T-cell (primary cell): ENCODE measurements at regions of chr2 and their contacts with region 1.

Region 1: DNA sequence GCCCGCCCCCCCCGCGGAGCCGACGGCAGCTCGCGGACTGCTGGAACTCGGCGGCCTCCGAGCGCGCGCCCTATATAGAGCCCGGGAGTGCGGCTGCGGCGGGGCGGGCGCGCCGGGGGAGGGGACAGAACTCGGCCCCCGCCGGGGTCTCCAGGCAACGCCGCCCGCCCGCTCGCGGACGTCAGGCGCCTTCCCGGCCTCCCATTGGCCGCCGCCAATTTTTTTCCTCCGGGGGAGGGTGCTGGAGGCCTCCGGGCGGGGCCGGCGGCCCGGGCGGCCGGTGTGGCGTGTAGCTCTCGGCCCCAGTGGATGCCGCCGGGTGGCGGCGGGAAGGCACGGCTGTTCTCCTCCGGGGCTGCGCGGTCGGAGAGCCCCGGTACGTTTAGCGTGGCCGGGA is at the start of gene ZFP36L2:
- DNase-seq: peak; percentile 85 to 98 (median 91)
- ATAC-seq: peak; percentile 71 to 77 (median 76)
- H3K4me3 ChIP-seq: peak within 1 kb of the TSS; percentile 92 to 98
- H3K4me3 Mint-ChIP-seq: peak within 1 kb of the TSS; percentile 74 to 98 (median 95)
- H3K27ac ChIP-seq: peak within 1 kb of the TSS; percentile 89
- H3K27ac Mint-ChIP-seq: peak within 1 kb of the TSS; percentile 93 to 96
- H3K4me1 ChIP-seq: peaks cover 17 to 31% of the 10 kb centered on the region in 2 experiments
- H3K4me1 Mint-ChIP-seq: peaks cover 26 to 43% (median 29%) of the 10 kb centered on the region in 3 donors
- H3K27me3 ChIP-seq: no peaks in the 10 kb centered on the region
- H3K27me3 Mint-ChIP-seq: peaks cover 0 to 4% of the 10 kb centered on the region in 2 donors
- total RNA-seq, gene ZFP36L2: 329 to 974 (median 377) TPM

Region 2: GRCh38 chr2:42944779-42945415 is 281.7 kb before region 1 on chr2:
- CTCF ChIA-PET with region 1: interaction called, 5 to 14 read pairs
- POLR2A ChIA-PET with region 1: no interaction called
- DNase-seq: no peak
- ATAC-seq: no peak
- H3K4me3 ChIP-seq: no peak overlapping the region
- H3K4me3 Mint-ChIP-seq: no peak overlapping the region
- H3K27ac ChIP-seq: no peak overlapping the region
- H3K27ac Mint-ChIP-seq: no peak overlapping the region
- H3K4me1 ChIP-seq: no peaks in the 10 kb centered on the region
- H3K4me1 Mint-ChIP-seq: peaks cover 0 to 5% (median 2%) of the 10 kb centered on the region in 3 donors
- H3K27me3 ChIP-seq: peaks cover 0 to 12% of the 10 kb centered on the region in 2 experiments
- H3K27me3 Mint-ChIP-seq: no peaks in the 10 kb centered on the region

Region 3: DNA sequence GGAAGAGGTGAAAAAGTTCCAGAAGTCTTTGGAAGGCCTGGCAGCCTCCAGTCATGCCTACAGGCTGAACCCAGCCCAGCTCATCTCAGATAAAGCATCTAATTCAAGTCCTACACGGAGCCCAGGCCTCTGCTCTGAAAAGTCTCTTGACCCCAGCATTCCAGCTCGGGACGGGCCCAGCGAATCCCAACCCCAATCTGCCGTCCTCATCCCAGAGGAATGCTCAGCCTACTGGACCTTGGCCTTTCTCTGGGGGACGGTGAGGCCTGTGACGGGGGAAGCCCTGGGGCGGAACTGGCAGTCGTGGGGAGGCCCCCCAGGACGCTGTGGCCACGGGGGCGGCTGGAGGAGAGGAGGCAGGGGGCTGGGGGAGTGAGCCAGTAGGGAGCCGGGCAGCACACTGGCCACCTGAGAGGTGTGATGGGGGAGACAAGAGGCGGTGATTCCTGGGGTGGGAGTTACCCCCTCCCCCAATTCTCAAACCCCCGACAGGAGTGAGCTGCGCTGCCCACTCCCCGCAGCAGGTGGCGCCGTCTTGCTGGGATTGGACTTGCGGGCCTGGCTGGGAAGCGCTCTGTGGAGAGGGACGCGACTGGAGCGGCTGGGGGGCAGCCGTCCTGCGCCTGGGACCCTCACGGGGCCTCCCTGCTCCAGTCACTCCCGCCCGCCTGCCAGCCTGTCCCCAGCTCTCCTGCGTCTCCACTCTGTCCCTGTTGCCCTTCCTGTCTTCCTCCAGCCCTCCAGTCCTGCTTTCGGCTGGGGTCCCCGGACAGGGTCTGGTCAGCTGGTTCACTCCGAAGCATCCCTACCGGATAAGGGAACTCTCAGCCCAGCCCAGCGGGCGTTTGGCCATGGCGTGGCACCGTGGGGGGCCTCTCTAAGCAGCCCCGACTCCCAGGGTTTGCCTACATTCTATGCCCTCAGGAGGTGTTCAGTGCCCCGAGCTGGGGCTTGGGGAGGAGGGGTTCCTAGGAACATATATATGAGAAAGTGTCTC is 251.5 kb before region 1 on chr2:
- CTCF ChIA-PET with region 1: interaction called, 7 to 22 read pairs
- POLR2A ChIA-PET with region 1: interaction called in 1 of 2 experiments, 3 read pairs
- DNase-seq: peak in 32 of 35 experiments; percentile 12 to 69 (median 43)
- ATAC-seq: peak; percentile 35 to 70 (median 64)
- H3K4me3 ChIP-seq: no peak overlapping the region
- H3K4me3 Mint-ChIP-seq: no peak overlapping the region
- H3K27ac ChIP-seq: no peak overlapping the region
- H3K27ac Mint-ChIP-seq: no peak overlapping the region
- H3K4me1 ChIP-seq: peaks cover 0 to 11% of the 10 kb centered on the region in 2 experiments
- H3K4me1 Mint-ChIP-seq: peaks cover 11 to 16% (median 14%) of the 10 kb centered on the region in 3 donors
- H3K27me3 ChIP-seq: peaks cover 0 to 5% of the 10 kb centered on the region in 2 experiments
- H3K27me3 Mint-ChIP-seq: peaks cover 2 to 4% of the 10 kb centered on the region in 2 donors

Region 4: DNA sequence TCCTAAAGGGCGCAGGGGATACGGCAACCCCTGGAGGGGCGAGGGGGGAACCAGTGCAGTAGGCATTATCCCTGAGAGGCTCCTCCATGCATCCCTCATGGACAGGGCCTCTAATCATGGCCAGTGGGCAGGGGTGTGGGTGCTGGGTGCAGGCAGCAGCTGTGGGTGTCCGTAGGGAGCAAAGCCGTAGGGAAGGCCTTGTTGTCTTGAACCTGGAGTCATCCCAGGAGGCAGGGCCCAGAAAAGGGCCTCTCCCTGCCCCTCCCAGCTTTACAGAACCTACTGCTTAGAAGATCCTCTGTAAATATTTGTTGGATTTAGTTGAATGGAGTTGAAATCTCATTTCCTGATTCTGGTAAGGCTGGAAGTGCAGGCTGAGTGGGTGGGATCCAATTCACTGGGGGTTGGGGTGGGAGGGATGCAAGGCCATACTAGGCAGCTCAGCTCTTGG is 227.1 kb before region 1 on chr2:
- CTCF ChIA-PET with region 1: no interaction called
- POLR2A ChIA-PET with region 1: no interaction called
- DNase-seq: no peak
- ATAC-seq: no peak
- H3K4me3 ChIP-seq: no peak overlapping the region
- H3K4me3 Mint-ChIP-seq: no peak overlapping the region
- H3K27ac ChIP-seq: no peak overlapping the region
- H3K27ac Mint-ChIP-seq: no peak overlapping the region
- H3K4me1 ChIP-seq: no peaks in the 10 kb centered on the region
- H3K4me1 Mint-ChIP-seq: no peaks in the 10 kb centered on the region
- H3K27me3 ChIP-seq: no peaks in the 10 kb centered on the region
- H3K27me3 Mint-ChIP-seq: no peaks in the 10 kb centered on the region

Region 5: GRCh38 chr2:43131024-43131889 is 95.3 kb before region 1 on chr2:
- CTCF ChIA-PET with region 1: interaction called, 45 to 49 read pairs
- POLR2A ChIA-PET with region 1: interaction called, 27 to 32 read pairs
- DNase-seq: peak; percentile 67 to 98 (median 86)
- ATAC-seq: peak; percentile 40 to 52 (median 47)
- H3K4me3 ChIP-seq: peak overlapping the region; percentile 27 to 49
- H3K4me3 Mint-ChIP-seq: peak overlapping the region; percentile 7 to 63 (median 52)
- H3K27ac ChIP-seq: peak overlapping the region; percentile 92
- H3K27ac Mint-ChIP-seq: peak overlapping the region; percentile 99 to 100
- H3K4me1 ChIP-seq: peaks cover 77 to 97% of the 10 kb centered on the region in 2 experiments
- H3K4me1 Mint-ChIP-seq: peaks cover 89 to 90% (median 89%) of the 10 kb centered on the region in 3 donors
- H3K27me3 ChIP-seq: no peaks in the 10 kb centered on the region
- H3K27me3 Mint-ChIP-seq: no peaks in the 10 kb centered on the region

Region 6: GRCh38 chr2:43142921-43143438 is 83.6 kb before region 1 on chr2:
- CTCF ChIA-PET with region 1: interaction called, 4 to 13 read pairs
- POLR2A ChIA-PET with region 1: interaction called, 3 to 11 read pairs
- DNase-seq: peak in 9 of 35 experiments; percentile 32 to 57 (median 45)
- ATAC-seq: peak; percentile 60 to 75 (median 71)
- H3K4me3 ChIP-seq: peak overlapping the region; percentile 46 to 50
- H3K4me3 Mint-ChIP-seq: peak overlapping the region; percentile 69 to 74 (median 73)
- H3K27ac ChIP-seq: peak overlapping the region; percentile 64
- H3K27ac Mint-ChIP-seq: peak overlapping the region; percentile 86 to 91
- H3K4me1 ChIP-seq: peaks cover 41 to 67% of the 10 kb centered on the region in 2 experiments
- H3K4me1 Mint-ChIP-seq: peaks cover 68 to 78% (median 71%) of the 10 kb centered on the region in 3 donors
- H3K27me3 ChIP-seq: no peaks in the 10 kb centered on the region
- H3K27me3 Mint-ChIP-seq: no peaks in the 10 kb centered on the region

Region 7: GRCh38 chr2:43169987-43170386 is 56.6 kb before region 1 on chr2:
- CTCF ChIA-PET with region 1: interaction called, 7 to 26 read pairs
- POLR2A ChIA-PET with region 1: interaction called, 18 to 22 read pairs
- DNase-seq: peak; percentile 35 to 78 (median 61)
- ATAC-seq: peak; percentile 11 to 34 (median 29)
- H3K4me3 ChIP-seq: peak overlapping the region; percentile 24 to 30
- H3K4me3 Mint-ChIP-seq: peak overlapping the region; percentile 70 to 85 (median 75)
- H3K27ac ChIP-seq: peak overlapping the region; percentile 100
- H3K27ac Mint-ChIP-seq: peak overlapping the region; percentile 99 to 100
- H3K4me1 ChIP-seq: peaks cover 48 to 90% of the 10 kb centered on the region in 2 experiments
- H3K4me1 Mint-ChIP-seq: peaks cover 85 to 86% (median 86%) of the 10 kb centered on the region in 3 donors
- H3K27me3 ChIP-seq: no peaks in the 10 kb centered on the region
- H3K27me3 Mint-ChIP-seq: no peaks in the 10 kb centered on the region

Region 8: DNA sequence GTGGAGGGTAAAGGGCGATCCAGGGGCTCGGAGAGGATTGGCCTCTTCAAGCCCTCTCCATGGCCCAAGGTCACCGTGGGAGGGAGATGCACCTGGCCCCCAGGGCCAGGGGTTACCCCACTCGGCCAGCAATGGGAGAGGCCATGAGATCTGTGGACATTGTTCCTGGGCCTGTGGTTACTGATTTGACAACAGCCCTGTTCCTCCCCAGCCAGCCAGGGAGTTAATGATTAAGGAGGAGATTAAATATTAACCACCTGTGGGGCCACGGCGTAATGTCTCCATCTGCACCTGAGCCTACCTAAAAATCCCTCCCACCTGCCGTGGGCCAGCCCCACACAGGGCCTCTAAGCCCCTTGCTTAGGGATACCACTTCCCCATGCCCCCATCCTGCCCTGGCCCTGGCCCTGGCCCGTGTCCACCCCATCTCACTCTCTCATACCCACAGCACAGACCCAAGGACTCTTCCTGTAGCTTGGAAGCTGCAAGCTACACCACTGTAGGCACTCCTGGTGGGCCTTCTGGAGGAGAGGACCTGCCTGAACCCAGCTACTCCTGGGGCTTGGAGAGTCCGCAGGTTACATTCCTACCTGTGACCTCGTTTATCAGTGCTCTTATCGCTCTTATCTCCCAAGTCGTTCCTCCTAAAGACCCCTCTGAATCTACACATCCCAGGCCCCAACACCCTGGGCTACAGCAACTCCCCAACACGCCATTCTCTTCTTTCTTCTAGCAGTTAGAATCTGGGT is 32.3 kb before region 1 on chr2:
- CTCF ChIA-PET with region 1: interaction called, 3 to 24 read pairs
- POLR2A ChIA-PET with region 1: interaction called, 5 to 8 read pairs
- DNase-seq: no peak
- ATAC-seq: peak in 3 of 4 experiments; percentile 9 to 11 (median 11)
- H3K4me3 ChIP-seq: peak overlapping the region; percentile 53 to 71
- H3K4me3 Mint-ChIP-seq: peak overlapping the region; percentile 83 to 87 (median 86)
- H3K27ac ChIP-seq: peak overlapping the region; percentile 98
- H3K27ac Mint-ChIP-seq: peak overlapping the region; percentile 100
- H3K4me1 ChIP-seq: peaks cover 35 to 93% of the 10 kb centered on the region in 2 experiments
- H3K4me1 Mint-ChIP-seq: peaks cover 58 to 71% (median 63%) of the 10 kb centered on the region in 3 donors
- H3K27me3 ChIP-seq: no peaks in the 10 kb centered on the region
- H3K27me3 Mint-ChIP-seq: no peaks in the 10 kb centered on the region